Activated naive CD4-positive, alpha-beta T cell treated with anti-CD3 and anti-CD28 coated beads for 36 hours (primary cell): ENCODE measurements at regions of chr17 and their contacts with region 1.

Region 1: GRCh38 chr17:38868817-38869525 is 887 bp upstream of the LASP1 start:
- DNase-seq: peak; percentile 95
- H3K4me3 Mint-ChIP-seq: peak overlapping the region; percentile 98
- H3K27ac Mint-ChIP-seq: peak overlapping the region; percentile 98
- H3K4me1 Mint-ChIP-seq: peaks cover 44% of the 10 kb centered on the region
- H3K27me3 Mint-ChIP-seq: peaks cover 2% of the 10 kb centered on the region

Region 2: DNA sequence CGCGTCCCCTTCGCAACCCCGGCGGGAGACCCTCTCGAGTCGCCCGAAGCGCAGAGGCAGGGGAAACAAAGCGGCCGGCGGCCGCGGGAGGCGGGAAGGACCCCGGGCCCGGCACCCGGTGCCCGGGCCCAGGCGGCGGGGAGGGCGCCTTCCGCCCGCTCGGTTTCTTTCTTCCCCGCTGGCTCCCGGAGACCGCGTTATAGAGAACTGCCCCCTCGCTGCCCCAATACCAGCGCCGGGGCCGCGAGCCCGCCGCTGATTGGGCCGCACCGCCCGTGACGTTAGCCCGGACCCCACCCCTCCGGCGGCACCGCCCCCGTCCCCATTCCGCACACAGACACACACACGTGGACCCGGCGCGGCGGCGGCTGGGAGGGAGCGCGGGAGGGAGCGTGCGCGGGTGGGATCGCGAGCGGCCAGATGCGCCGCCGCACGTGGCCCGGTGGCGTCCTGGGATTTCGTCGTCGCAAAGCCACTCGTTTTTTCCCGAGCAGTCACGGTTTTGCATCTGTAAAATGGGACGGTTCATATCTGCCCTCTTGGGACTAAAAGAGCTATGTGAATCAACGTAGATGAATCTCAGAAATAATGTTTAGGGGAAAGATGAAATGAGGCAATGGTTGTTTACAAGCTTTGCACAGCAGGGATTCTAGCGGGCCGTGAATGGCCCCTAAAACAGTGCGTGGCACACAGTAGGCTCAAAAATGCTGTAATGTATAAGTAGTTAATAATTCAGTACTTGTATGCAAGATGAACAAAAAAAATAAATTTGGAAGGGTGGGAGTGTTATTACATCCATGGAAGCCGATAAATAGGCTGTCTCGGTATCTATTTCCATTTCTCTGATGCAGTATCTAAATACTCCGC is 194.0 kb before region 1 on chr17 and contains the start of gene EPOP:
- CTCF ChIA-PET with region 1: no interaction called
- intact Hi-C with region 1: loop called (anchors 5 kb)
- DNase-seq: peak; percentile 91
- H3K4me3 Mint-ChIP-seq: peak within 1 kb of the TSS; percentile 63
- H3K27ac Mint-ChIP-seq: peak within 1 kb of the TSS; percentile 84
- H3K4me1 Mint-ChIP-seq: peaks cover 52% of the 10 kb centered on the region
- H3K27me3 Mint-ChIP-seq: peaks cover 13% of the 10 kb centered on the region
- total RNA-seq, gene EPOP: 17.6 to 19.2 TPM

Region 3: GRCh38 chr17:38799378-38800236 is 69.4 kb before region 1 on chr17 and contains the start of gene PIP4K2B:
- CTCF ChIA-PET with region 1: no interaction called
- intact Hi-C with region 1: loop called (anchors 5 kb)
- DNase-seq: peak; percentile 91
- H3K4me3 Mint-ChIP-seq: peak within 1 kb of the TSS; percentile 95
- H3K27ac Mint-ChIP-seq: peak within 1 kb of the TSS; percentile 89
- H3K4me1 Mint-ChIP-seq: peaks cover 34% of the 10 kb centered on the region
- H3K27me3 Mint-ChIP-seq: no peaks in the 10 kb centered on the region
- total RNA-seq, gene PIP4K2B: 30.1 to 33.4 TPM

Region 4: GRCh38 chr17:38879878-38880682 is 11.1 kb after region 1 on chr17:
- CTCF ChIA-PET with region 1: interaction called, 24 read pairs
- intact Hi-C with region 1: loop called (anchors 1 kb)
- DNase-seq: peak; percentile 17
- H3K4me3 Mint-ChIP-seq: no peak overlapping the region
- H3K27ac Mint-ChIP-seq: peak overlapping the region; percentile 93
- H3K4me1 Mint-ChIP-seq: peaks cover 88% of the 10 kb centered on the region
- H3K27me3 Mint-ChIP-seq: no peaks in the 10 kb centered on the region

Region 5: GRCh38 chr17:38925263-38925995 is 56.5 kb after region 1 on chr17 and contains the start of gene LASP1NB:
- CTCF ChIA-PET with region 1: interaction called, 22 read pairs
- intact Hi-C with region 1: loop called (anchors 1 kb)
- DNase-seq: peak; percentile 72
- H3K4me3 Mint-ChIP-seq: no peak within 1 kb of the TSS
- H3K27ac Mint-ChIP-seq: peak within 1 kb of the TSS; percentile 46
- H3K4me1 Mint-ChIP-seq: peaks cover 36% of the 10 kb centered on the region
- H3K27me3 Mint-ChIP-seq: no peaks in the 10 kb centered on the region

Region 6: GRCh38 chr17:39057701-39058206 is 188.8 kb after region 1 on chr17:
- CTCF ChIA-PET with region 1: no interaction called
- intact Hi-C with region 1: loop called (anchors 1 kb)
- DNase-seq: no peak
- H3K4me3 Mint-ChIP-seq: peak overlapping the region; percentile 84
- H3K27ac Mint-ChIP-seq: no peak overlapping the region
- H3K4me1 Mint-ChIP-seq: peaks cover 13% of the 10 kb centered on the region
- H3K27me3 Mint-ChIP-seq: no peaks in the 10 kb centered on the region

Region 7: DNA sequence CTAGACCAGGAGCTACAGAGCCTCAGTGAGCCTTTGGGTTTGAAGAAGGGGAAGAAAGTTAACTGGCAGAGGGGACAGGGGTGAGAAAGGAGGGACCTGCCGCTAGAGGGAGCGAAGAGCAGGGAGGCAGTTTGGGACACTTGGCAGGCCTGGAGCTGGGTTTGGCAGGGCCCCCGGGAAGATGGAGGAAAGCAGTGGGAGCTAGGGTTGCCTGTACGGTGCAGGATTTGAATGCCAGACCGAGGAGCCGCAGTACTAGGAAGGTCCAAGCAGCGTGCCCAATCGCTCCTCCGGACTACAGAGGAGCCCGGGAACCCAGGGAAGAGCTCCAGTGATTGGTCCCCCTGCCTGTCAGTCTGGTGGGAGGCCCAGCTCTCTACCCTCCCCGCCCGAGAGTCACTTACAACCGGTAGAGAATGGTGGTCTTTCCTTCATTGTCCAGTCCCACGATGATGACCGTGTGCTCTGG is 295.7 kb after region 1 on chr17:
- CTCF ChIA-PET with region 1: no interaction called
- intact Hi-C with region 1: no loop called
- DNase-seq: peak; percentile 83
- H3K4me3 Mint-ChIP-seq: peak overlapping the region; percentile 90
- H3K27ac Mint-ChIP-seq: no peak overlapping the region
- H3K4me1 Mint-ChIP-seq: peaks cover 16% of the 10 kb centered on the region
- H3K27me3 Mint-ChIP-seq: peaks cover 23% of the 10 kb centered on the region

Region 8: DNA sequence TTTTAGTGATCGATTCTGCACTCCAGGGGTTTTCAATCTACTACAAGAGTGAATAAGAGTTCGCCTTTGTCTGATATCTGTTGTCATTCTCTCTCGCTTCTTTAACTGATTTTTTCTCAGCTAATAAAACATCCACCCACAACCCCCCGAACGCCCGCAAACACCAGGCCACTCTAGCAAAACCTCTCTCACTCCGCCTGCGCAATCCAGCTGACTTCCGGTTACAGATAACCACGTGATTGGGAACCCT is 330.8 kb after region 1 on chr17:
- CTCF ChIA-PET with region 1: no interaction called
- intact Hi-C with region 1: loop called (anchors 2 kb)
- DNase-seq: peak; percentile 94
- H3K4me3 Mint-ChIP-seq: peak overlapping the region; percentile 86
- H3K27ac Mint-ChIP-seq: peak overlapping the region; percentile 99
- H3K4me1 Mint-ChIP-seq: peaks cover 50% of the 10 kb centered on the region
- H3K27me3 Mint-ChIP-seq: no peaks in the 10 kb centered on the region